PC-3 (cell line): ENCODE measurements at regions of chr3 and their contacts with region 1.

Region 1: DNA sequence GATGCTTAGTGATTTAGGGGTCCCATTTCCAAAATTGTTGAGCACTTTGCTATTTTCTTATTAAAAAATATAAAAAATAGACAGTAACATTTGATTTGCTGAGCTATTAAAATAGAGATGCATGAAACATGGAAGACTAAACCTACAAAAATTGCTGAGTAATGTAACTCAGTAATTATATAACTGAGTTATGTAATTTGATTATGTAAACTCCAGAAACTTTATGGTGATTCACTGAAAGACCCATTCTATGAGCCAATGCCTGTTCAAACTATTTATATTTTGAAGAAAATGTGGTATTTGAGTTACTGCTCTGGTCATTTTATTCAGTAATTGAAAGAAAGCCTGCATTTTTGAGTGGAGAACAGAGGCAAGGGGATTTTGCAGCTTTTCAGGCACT is 1221.5 kb upstream of the ALCAM start:
- DNase-seq: no peak
- ATAC-seq: peak; percentile 15; the same call in 1 of the 2 replicates
- H3K4me3 ChIP-seq: no peak overlapping the region
- H3K27ac ChIP-seq: no peak overlapping the region
- H3K4me1 ChIP-seq: no peaks in the 10 kb centered on the region
- H3K27me3 ChIP-seq: no peaks in the 10 kb centered on the region
- CTCF ChIP-seq: no peak

Region 2: GRCh38 chr3:103794656-103795055 is 350.5 kb before region 1 on chr3:
- CTCF ChIA-PET with region 1: no interaction called
- POLR2A ChIA-PET with region 1: no interaction called
- intact Hi-C with region 1: loop called (anchors 5 kb)
- DNase-seq: peak; percentile 25
- ATAC-seq: peak; percentile 79
- H3K4me3 ChIP-seq: no peak overlapping the region
- H3K27ac ChIP-seq: no peak overlapping the region
- H3K4me1 ChIP-seq: no peaks in the 10 kb centered on the region
- H3K27me3 ChIP-seq: no peaks in the 10 kb centered on the region
- CTCF ChIP-seq: peak; percentile 54

Region 3: DNA sequence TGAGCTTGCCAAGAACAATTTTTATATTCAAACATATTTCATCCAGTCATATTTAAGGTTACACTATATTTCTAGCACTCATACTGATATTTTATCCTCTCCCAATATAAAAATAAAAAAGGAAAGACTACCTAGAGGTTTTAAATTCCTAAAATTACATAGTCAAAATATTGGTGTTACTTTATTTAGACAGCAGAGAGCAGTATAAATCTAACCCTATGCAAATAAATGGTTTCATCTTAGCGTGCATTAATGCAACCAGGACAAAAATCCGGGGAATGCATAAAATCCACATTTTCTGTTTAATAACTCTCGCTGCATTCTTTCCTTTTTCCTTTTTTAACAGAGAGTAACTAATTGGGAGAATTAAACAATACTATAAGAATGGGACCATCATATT is 225.8 kb before region 1 on chr3:
- CTCF ChIA-PET with region 1: no interaction called
- POLR2A ChIA-PET with region 1: no interaction called
- intact Hi-C with region 1: loop called (anchors 2 kb)
- DNase-seq: peak; percentile 25
- ATAC-seq: peak; percentile 65
- H3K4me3 ChIP-seq: no peak overlapping the region
- H3K27ac ChIP-seq: no peak overlapping the region
- H3K4me1 ChIP-seq: no peaks in the 10 kb centered on the region
- H3K27me3 ChIP-seq: peaks cover 34% of the 10 kb centered on the region; the same call in 1 of the 2 replicates
- CTCF ChIP-seq: peak; percentile 52

Region 4: DNA sequence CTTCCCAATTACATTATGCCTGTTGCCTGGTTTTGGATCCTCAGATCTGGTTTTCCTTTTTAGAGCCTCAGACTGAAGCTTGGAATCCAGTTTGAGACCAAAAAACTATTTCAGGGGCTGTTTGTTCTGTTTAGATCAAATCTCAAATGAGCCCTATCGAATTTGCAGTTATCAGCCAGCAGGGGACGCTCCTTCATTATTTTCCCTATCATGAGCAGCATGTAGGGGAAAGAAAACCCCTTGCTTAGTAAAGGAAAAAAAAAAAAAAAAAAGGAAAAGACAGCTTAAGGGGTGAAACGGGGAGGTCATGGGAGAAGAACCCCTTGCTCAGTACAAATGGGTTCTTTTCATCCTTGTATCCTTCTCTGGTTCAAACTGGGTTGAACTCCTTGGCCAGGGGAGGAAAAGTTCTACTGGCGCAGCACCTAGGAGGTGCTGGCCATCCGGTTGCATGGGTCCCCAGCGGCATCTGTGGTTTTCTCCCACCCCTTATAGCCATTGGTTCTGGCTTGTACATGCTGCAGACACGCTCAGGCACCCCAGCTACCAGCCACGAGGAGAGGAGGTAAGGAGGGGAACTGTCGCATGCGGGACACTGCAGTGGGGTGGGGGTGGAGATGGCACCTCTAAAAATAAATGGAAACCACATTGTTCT is 153.6 kb before region 1 on chr3:
- CTCF ChIA-PET with region 1: interaction called, 7 read pairs
- POLR2A ChIA-PET with region 1: no interaction called
- intact Hi-C with region 1: loop called (anchors 1 kb)
- DNase-seq: peak; percentile 57
- ATAC-seq: peak; percentile 74; the same call in 1 of the 2 replicates
- H3K4me3 ChIP-seq: no peak overlapping the region
- H3K27ac ChIP-seq: no peak overlapping the region
- H3K4me1 ChIP-seq: no peaks in the 10 kb centered on the region
- H3K27me3 ChIP-seq: peaks cover 6% of the 10 kb centered on the region; the same call in 1 of the 2 replicates
- CTCF ChIP-seq: peak; percentile 91

Region 5: DNA sequence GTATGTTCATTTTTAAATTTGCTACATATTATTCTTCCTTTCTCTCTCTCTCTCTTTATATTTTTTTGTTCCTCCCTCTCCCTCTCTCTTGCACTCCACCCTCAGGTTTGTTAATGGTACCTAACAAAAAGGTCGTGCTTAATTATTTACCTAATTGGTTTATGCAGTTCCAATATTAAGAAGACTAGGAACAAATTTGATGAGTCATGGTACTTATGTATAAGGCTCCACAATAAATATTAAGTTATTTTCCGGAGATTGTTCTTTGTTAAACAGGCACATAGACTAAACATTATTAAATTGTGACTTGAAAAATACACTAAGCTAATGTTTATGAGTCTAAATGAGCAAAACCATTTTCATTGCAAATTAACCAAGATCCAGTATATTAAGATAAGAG is 20.7 kb after region 1 on chr3:
- CTCF ChIA-PET with region 1: no interaction called
- POLR2A ChIA-PET with region 1: no interaction called
- intact Hi-C with region 1: no loop called
- DNase-seq: no peak
- ATAC-seq: no peak
- H3K4me3 ChIP-seq: no peak overlapping the region
- H3K27ac ChIP-seq: no peak overlapping the region
- H3K4me1 ChIP-seq: no peaks in the 10 kb centered on the region
- H3K27me3 ChIP-seq: no peaks in the 10 kb centered on the region; the same call in 1 of the 2 replicates
- CTCF ChIP-seq: no peak